RWPE1 (cell line): ENCODE measurements at regions of chr2 and their contacts with region 1.

Region 1: DNA sequence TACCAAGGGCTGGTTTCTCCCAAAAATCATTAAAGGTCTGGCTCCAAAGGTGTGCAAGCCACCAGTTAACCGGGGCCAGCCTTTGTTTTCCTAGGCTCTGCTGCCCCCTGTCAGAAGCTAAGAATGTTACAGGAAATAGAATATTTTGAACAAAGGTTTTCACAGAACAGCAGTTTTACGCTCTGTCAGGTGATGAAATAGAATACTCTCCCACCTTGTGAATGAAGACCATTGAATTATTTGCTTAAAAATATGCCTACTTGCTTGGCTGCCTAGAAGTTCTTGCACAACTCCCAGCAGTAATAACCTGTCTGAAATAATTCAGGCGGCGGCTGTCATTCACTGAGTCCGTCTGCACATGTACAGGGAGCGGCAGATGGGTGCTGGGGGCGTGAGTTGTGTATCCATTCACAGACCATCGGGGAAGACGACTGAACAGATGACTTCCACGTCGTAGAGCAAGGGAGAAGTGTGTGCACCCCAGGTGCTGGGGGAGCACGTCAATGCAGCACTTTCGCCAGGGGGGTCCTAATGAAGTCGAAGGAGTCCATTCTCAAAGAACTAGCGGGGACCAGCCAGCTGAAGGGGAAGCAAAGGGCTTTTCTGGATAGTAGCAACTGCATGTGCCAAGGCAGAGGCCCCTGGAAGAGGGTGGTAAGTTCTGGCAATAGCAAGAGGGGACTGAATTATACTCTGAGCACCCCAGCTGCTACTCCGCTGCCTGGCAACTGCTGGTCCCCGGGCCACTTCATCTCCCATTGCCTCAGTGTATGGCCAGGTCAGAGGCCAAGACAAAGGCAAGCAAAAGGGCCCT is 56.1 kb downstream of the SF3B1 start:
- DNase-seq: peak; percentile 71
- H3K27ac ChIP-seq: no peak overlapping the region
- CTCF ChIP-seq: peak; percentile 76

Region 2: GRCh38 chr2:197191177-197191939 is 187.3 kb before region 1 on chr2:
- CTCF ChIA-PET with region 1: interaction called, 11 read pairs
- POLR2A ChIA-PET with region 1: no interaction called
- DNase-seq: peak; percentile 59
- H3K27ac ChIP-seq: no peak overlapping the region
- CTCF ChIP-seq: peak; percentile 71